CD8-positive, alpha-beta memory T cell (primary cell): ENCODE measurements at regions of chr14 and their contacts with region 1.

Region 1: DNA sequence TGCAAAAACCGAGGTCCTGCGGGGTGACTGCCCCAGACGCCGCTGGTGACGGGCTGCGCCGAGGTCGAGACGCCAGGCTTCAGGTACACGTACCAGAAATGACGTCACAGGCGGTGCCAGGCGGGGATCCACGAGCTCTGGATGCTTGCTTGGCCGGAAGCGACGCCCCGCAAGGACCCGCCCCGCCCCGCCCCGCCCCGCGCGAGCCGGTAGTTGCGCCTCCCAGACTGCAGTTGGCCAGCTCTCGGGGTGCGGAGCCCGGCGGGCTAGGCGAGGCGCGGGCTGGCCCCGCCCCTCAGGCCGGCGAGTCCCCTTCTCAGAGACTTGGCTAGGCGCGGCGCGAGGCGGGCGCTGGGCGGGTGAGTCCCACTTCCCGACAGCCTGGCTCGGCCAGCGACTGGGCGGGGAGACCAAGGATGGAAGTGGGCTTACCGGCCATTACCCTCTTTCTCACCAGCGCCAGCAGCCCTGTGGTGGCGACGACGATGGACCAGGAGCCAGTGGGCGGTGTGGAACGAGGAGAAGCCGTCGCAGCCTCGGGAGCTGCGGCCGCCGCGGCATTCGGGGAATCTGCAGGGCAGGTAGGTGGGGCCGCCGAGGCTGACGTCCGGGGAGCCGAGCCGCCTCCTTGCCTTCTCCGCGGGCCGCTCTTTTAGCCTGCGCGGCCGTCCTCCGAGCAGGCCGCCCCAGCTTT is at the start of gene FAM177A1:
- DNase-seq: peak; percentile 99 to 100 (median 99)
- H3K4me3 ChIP-seq: peak within 1 kb of the TSS; percentile 90
- H3K4me3 Mint-ChIP-seq: peak within 1 kb of the TSS; percentile 89 to 99 (median 93)
- H3K27ac ChIP-seq: peak within 1 kb of the TSS; percentile 98
- H3K27ac Mint-ChIP-seq: peak within 1 kb of the TSS; percentile 98 to 100 (median 99)
- H3K4me1 ChIP-seq: peaks cover 21% of the 10 kb centered on the region
- H3K4me1 Mint-ChIP-seq: peaks cover 23 to 41% (median 34%) of the 10 kb centered on the region in 3 donors
- H3K27me3 ChIP-seq: no peaks in the 10 kb centered on the region
- H3K27me3 Mint-ChIP-seq: peaks cover 0 to 4% of the 10 kb centered on the region in 2 donors
- total RNA-seq, gene FAM177A1: 43.1 to 47.4 TPM

Region 2: DNA sequence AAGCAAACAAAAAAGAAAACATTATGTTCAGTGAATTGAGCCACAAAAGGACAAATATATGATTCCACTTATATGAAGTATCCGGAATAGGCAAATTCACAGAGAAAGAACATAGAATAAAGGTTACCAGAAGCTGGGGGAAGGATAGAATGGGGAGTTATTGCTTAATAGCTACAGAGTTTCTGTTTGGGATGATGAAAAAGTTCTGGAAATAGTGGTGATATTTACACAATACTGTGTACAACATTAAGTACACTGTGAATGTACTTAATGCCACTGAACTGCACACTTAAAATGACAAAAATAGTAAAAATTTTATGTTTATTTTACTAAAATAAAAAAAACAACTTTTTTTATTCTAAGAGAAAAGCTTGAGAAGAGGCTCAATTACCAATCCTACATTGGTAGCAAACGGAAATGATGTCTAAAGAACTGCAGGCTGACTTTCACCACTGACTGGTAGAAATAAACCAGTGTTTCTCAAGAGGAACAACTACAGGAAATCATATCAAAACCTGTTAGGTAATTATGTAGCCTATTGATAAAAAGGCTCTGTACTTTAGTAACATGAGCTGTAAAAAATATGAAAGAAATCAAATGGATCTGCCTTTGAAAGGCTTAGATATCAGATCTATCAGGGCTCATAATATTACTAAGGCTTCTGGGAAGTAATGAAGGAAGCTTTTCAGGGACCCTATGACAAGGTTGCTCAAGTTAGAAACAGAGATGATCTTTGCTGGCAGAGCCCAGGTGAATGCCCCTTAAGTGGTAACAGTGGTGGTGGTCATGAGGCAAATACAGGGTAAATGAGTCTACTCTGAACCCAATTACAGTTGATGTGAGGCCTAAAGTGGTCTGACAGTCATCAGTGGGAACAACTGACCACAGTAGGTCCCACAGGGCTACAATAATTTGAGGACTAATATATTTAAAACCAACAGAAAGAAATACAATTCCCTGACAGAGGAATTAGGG is 212.4 kb before region 1 on chr14:
- CTCF ChIA-PET with region 1: no interaction called
- POLR2A ChIA-PET with region 1: no interaction called
- DNase-seq: peak in 1 of 5 donors; percentile 19
- H3K4me3 ChIP-seq: no peak overlapping the region
- H3K4me3 Mint-ChIP-seq: peak overlapping the region in 5 of 7 donors; percentile 6 to 44 (median 16)
- H3K27ac ChIP-seq: no peak overlapping the region
- H3K27ac Mint-ChIP-seq: peak overlapping the region; percentile 7 to 98 (median 85)
- H3K4me1 ChIP-seq: peaks cover 32% of the 10 kb centered on the region
- H3K4me1 Mint-ChIP-seq: peaks cover 45 to 72% (median 65%) of the 10 kb centered on the region in 3 donors
- H3K27me3 ChIP-seq: no peaks in the 10 kb centered on the region
- H3K27me3 Mint-ChIP-seq: no peaks in the 10 kb centered on the region

Region 3: GRCh38 chr14:34851395-34851794 is 194.8 kb before region 1 on chr14:
- CTCF ChIA-PET with region 1: no interaction called
- POLR2A ChIA-PET with region 1: no interaction called
- DNase-seq: no peak
- H3K4me3 ChIP-seq: no peak overlapping the region
- H3K4me3 Mint-ChIP-seq: no peak overlapping the region
- H3K27ac ChIP-seq: no peak overlapping the region
- H3K27ac Mint-ChIP-seq: no peak overlapping the region
- H3K4me1 ChIP-seq: peaks cover 5% of the 10 kb centered on the region
- H3K4me1 Mint-ChIP-seq: peaks cover 21 to 43% (median 40%) of the 10 kb centered on the region in 3 donors
- H3K27me3 ChIP-seq: no peaks in the 10 kb centered on the region
- H3K27me3 Mint-ChIP-seq: no peaks in the 10 kb centered on the region

Region 4: DNA sequence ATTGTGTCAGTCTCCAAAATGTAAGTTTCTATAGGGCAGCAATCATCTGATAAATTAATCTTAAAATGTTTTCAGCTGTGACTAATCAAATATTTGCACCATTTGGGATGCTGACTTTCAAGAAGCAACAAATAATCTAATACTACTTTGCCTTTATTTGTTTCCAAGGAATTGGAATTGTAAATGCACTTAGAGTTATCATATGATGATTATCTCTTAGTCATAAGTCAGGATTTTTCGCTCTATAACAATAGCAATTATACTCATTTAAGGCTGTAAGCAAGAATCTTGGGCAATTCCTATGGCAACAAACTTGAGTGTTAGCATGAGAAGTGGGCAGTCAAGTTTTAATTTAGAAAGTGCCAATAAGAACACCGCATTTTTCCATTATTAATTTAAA is 158.0 kb before region 1 on chr14:
- CTCF ChIA-PET with region 1: no interaction called
- POLR2A ChIA-PET with region 1: no interaction called
- DNase-seq: no peak
- H3K4me3 ChIP-seq: no peak overlapping the region
- H3K4me3 Mint-ChIP-seq: no peak overlapping the region
- H3K27ac ChIP-seq: no peak overlapping the region
- H3K27ac Mint-ChIP-seq: no peak overlapping the region
- H3K4me1 ChIP-seq: no peaks in the 10 kb centered on the region
- H3K4me1 Mint-ChIP-seq: peaks cover 4 to 5% (median 4%) of the 10 kb centered on the region in 3 donors
- H3K27me3 ChIP-seq: no peaks in the 10 kb centered on the region
- H3K27me3 Mint-ChIP-seq: no peaks in the 10 kb centered on the region

Region 5: GRCh38 chr14:34997762-34998161 is 48.4 kb before region 1 on chr14:
- CTCF ChIA-PET with region 1: no interaction called
- POLR2A ChIA-PET with region 1: no interaction called
- DNase-seq: no peak
- H3K4me3 ChIP-seq: no peak overlapping the region
- H3K4me3 Mint-ChIP-seq: no peak overlapping the region
- H3K27ac ChIP-seq: no peak overlapping the region
- H3K27ac Mint-ChIP-seq: peak overlapping the region in 2 of 8 donors; percentile 9 to 52
- H3K4me1 ChIP-seq: no peaks in the 10 kb centered on the region
- H3K4me1 Mint-ChIP-seq: peaks cover 19 to 36% (median 26%) of the 10 kb centered on the region in 3 donors
- H3K27me3 ChIP-seq: no peaks in the 10 kb centered on the region
- H3K27me3 Mint-ChIP-seq: no peaks in the 10 kb centered on the region

Region 6: GRCh38 chr14:35121887-35122695 is 75.9 kb after region 1 on chr14 and contains the starts of genes PPP2R3C and PRORP:
- CTCF ChIA-PET with region 1: no interaction called
- POLR2A ChIA-PET with region 1: interaction called, 23 read pairs
- DNase-seq: peak; percentile 87 to 96 (median 91)
- H3K4me3 ChIP-seq: peak within 1 kb of the TSS; percentile 95
- H3K4me3 Mint-ChIP-seq: peak within 1 kb of the TSS; percentile 95 to 99 (median 98)
- H3K27ac ChIP-seq: peak within 1 kb of the TSS; percentile 99
- H3K27ac Mint-ChIP-seq: peak within 1 kb of the TSS; percentile 99 to 100 (median 100)
- H3K4me1 ChIP-seq: peaks cover 44% of the 10 kb centered on the region
- H3K4me1 Mint-ChIP-seq: peaks cover 63 to 90% (median 90%) of the 10 kb centered on the region in 3 donors
- H3K27me3 ChIP-seq: no peaks in the 10 kb centered on the region
- H3K27me3 Mint-ChIP-seq: peaks cover 0 to 4% of the 10 kb centered on the region in 2 donors
- total RNA-seq, gene PPP2R3C: 46.9 to 48.1 TPM
- total RNA-seq, gene PRORP: 36.2 to 39.9 TPM